Mammary epithelial cell (primary cell): ENCODE measurements at regions of chr7 and their contacts with region 1.

Region 1: GRCh38 chr7:20849401-20849800 is 62.7 kb upstream of the SP8 start:
- DNase-seq: peak; percentile 35
- H3K4me3 ChIP-seq: no peak overlapping the region
- H3K27ac ChIP-seq: no peak overlapping the region
- H3K4me1 ChIP-seq: peaks cover 7% of the 10 kb centered on the region
- H3K27me3 ChIP-seq: no peaks in the 10 kb centered on the region
- CTCF ChIP-seq: no peak

Region 2: DNA sequence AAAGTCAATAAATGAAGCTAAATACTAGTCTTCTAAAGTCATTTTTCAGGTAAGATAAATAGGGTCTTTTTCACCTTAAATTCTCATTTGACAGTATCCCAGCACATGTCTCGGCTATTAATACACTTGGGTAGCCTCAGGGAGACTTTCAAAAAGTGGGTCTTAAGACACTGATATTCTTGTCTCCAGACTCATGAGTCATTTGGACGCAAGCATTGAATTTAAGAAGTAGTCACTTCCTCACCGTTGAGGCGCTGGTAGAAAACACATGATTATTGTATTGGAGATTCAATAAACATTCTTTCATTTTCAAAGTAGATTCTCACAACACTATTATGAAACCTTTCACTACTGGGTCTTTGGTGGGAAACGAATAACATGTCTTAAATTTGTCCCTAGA is 46.2 kb after region 1 on chr7:
- CTCF ChIA-PET with region 1: no interaction called
- dilution Hi-C with region 1: no loop called
- in situ Hi-C with region 1: no loop called
- intact Hi-C with region 1: loop called (anchors 5 kb)
- DNase-seq: peak; percentile 91
- H3K4me3 ChIP-seq: no peak overlapping the region
- H3K27ac ChIP-seq: peak overlapping the region; percentile 92
- H3K4me1 ChIP-seq: peaks cover 29% of the 10 kb centered on the region
- H3K27me3 ChIP-seq: no peaks in the 10 kb centered on the region
- CTCF ChIP-seq: no peak

Region 3: GRCh38 chr7:21076054-21076453 is 226.7 kb after region 1 on chr7:
- CTCF ChIA-PET with region 1: no interaction called
- dilution Hi-C with region 1: no loop called
- in situ Hi-C with region 1: no loop called
- intact Hi-C with region 1: no loop called
- DNase-seq: no peak
- H3K4me3 ChIP-seq: no peak overlapping the region
- H3K27ac ChIP-seq: no peak overlapping the region
- H3K4me1 ChIP-seq: peaks cover 4% of the 10 kb centered on the region
- H3K27me3 ChIP-seq: no peaks in the 10 kb centered on the region
- CTCF ChIP-seq: no peak